G401 (cell line): ENCODE measurements at regions of chr6 and their contacts with region 1.

Region 1: GRCh38 chr6:89432875-89433251 is at the start of gene ANKRD6:
- DNase-seq: peak; percentile 63
- total RNA-seq, gene ANKRD6: 12.1 and 22.1 TPM in 2 replicates

Region 2: DNA sequence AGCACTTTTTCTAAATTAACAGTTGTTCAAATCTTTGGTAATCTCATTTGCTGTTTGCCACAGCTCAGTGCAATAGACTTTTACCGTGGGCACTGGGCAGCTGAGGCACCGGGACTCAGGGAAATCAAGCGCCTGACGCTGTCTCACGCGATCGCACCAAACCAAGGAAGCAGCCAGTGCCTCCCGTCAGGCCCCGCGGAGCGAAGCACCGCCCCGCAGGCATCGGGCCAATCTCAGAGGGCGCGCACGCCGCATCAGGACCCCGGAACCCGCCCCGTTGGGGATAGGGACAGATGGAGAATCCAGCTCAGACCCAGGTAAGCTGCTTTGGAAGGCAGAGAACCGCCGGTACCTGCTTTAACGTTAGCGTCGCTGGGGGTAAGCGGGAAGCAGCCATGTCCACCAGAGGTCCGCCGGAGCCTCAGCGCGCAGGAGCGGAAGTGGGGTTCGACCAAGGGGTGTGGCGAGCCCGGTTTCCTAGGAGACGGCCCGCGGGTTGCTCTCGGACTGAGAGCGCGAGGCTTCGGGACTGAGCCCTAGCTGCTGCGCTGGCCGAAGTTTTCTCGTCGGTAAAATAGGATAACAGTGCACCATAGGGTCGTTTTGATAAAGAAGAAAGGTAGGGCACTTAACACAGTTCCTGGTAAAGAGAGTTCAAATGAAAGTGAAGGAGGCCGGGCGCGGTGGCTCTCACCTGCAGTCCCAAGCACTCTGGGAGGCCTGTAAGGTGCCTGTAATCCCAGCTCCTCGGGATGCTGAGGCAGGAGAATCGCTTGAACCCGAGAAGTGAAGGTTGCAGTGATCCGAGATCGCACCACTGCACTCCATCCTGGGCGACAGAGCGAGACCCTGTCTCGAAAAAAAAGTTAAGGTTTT is 205.7 kb after region 1 on chr6 and contains the start of gene LYRM2:
- in situ Hi-C with region 1: loop called (anchors 10 kb)
- DNase-seq: peak; percentile 94
- total RNA-seq, gene LYRM2: 17.0 and 19.9 TPM in 2 replicates